Psoas muscle (tissue), 8 donors: ENCODE measurements at regions of chr17 and their contacts with region 1.

Region 1: DNA sequence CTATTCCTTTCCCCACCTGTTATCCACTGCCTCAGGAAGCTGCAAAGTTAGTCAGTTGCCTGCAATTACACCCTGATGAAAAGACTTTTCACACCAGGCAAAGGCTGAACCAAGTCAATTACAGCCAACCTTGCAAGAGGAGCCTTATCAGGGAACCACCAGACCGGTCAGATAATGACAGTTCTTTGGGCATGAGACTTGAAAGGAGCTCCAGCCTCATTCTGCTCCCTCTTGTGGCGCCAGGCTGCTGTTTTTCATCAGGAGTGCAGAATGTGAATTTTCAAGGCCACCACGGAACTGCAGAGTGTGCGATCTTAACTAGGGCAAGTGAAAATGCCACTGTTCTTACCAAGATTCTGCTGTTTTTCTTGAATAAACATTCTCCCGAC is 22.5 kb downstream of the DNAI2 start:
- DNase-seq: peak; percentile 50 to 76
- ATAC-seq: peak; percentile 56 to 80 (median 71)
- H3K4me3 ChIP-seq: no peak overlapping the region
- H3K27ac ChIP-seq: no peak overlapping the region
- H3K4me1 ChIP-seq: no peaks in the 10 kb centered on the region
- H3K27me3 ChIP-seq: no peaks in the 10 kb centered on the region
- CTCF ChIP-seq: peak; percentile 55

Region 2: GRCh38 chr17:74354123-74354522 is 57.6 kb after region 1 on chr17:
- intact Hi-C with region 1: loop called (anchors 2 to 5 kb)
- DNase-seq: peak in 1 of 2 donors; percentile 45
- ATAC-seq: peak in 1 of 4 donors; percentile 33
- H3K4me3 ChIP-seq: no peak overlapping the region
- H3K27ac ChIP-seq: no peak overlapping the region
- H3K4me1 ChIP-seq: no peaks in the 10 kb centered on the region
- H3K27me3 ChIP-seq: peaks cover 0 to 88% (median 36%) of the 10 kb centered on the region in 3 donors
- CTCF ChIP-seq: peak; percentile 16

Region 3: GRCh38 chr17:74361230-74362068 is 64.9 kb after region 1 on chr17 and contains the start of gene BTBD17:
- intact Hi-C with region 1: loop called in 1 of 2 experiments (anchors 5 kb)
- DNase-seq: peak; percentile 52 to 77
- ATAC-seq: peak; percentile 78 to 86 (median 78)
- H3K4me3 ChIP-seq: no peak within 1 kb of the TSS
- H3K27ac ChIP-seq: no peak within 1 kb of the TSS
- H3K4me1 ChIP-seq: no peaks in the 10 kb centered on the region
- H3K27me3 ChIP-seq: peaks cover 0 to 49% (median 13%) of the 10 kb centered on the region in 3 donors
- CTCF ChIP-seq: peak; percentile 63
- total RNA-seq, gene BTBD17: not detected